Left ventricle myocardium inferior (tissue), 1 donor: ENCODE measurements at regions of chr6 and their contacts with region 1.

Region 1: GRCh38 chr6:35024551-35025054 is 116.5 kb downstream of the TCP11 start:
- DNase-seq: peak; percentile 58
- H3K4me3 ChIP-seq: peak overlapping the region; percentile 35
- H3K27ac ChIP-seq: peak overlapping the region; percentile 96
- H3K4me1 ChIP-seq: peaks cover 100% of the 10 kb centered on the region
- H3K27me3 ChIP-seq: no peaks in the 10 kb centered on the region
- CTCF ChIP-seq: peak; percentile 18

Region 2: DNA sequence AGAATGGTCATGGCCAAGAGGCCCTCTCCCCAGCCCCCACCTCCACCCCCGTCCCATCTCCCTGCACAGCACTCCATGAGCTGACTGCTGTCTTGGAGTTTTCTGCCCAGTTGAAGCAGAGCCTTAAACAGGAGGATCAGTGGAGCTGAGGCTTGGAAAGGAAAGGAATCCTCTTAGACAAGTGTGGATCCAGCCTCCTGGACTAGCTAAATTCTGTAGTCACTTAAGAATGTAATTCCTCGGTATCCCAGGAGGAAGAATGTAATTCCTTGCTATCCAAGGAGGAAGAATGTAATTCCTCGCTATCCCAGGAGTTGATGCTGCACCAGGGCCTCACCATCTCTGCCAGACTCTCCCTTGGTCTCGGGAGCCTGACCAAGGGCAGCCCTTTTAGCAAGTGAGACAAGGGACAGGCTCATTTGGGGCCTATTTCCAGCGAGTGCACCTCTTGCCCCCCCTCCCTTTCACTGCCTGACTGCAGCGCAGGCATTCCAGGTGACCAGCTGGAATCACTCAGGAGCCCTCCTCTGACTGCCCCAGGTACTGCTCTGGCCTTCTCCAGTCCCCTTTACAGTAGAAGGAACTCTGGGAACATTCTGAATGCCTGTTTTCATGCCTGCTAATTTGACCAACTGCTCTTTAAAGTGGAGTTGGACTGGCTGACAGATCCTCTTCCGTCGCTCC is 40.3 kb after region 1 on chr6:
- intact Hi-C with region 1: loop called (anchors 5 kb)
- DNase-seq: no peak
- H3K4me3 ChIP-seq: no peak overlapping the region
- H3K27ac ChIP-seq: peak overlapping the region; percentile 72
- H3K4me1 ChIP-seq: peaks cover 70% of the 10 kb centered on the region
- H3K27me3 ChIP-seq: no peaks in the 10 kb centered on the region
- CTCF ChIP-seq: peak; percentile 18